HCT116 (cell line): ENCODE measurements at regions of chr2 and their contacts with region 1.

Region 1: DNA sequence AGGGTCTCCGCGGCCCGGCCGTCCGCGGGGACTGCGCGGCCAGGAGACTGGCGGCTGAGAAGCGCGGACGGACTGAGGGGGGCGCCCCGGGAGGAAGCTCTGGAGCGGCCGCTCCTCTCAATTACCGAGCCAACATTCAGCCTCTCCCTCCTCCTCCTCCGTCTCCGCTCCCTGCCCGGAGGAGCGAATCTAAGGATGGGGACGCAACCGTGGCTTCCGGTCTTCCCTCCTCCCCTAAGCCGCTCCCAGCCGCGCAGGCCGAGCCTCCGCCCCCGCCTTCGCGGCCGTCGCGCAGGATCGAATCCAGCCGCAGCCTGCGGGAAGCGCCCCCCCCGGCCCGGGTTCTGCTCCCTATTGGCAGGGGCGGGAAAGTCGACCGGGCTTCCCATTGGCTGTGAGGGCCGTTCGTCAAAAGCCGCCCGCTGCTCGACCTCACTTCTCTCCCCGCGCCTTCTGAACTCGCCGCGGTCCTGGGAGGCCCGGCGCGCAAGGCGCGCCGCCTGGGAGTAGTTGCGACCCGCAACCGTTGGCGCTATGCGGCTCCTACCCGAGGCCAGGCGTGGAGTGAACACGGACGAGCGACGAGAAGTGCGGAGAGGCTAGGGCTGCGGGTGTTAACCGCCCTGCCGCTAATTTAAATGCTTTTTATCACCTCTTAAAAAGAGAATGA is at the start of gene HNRNPLL:
- DNase-seq: peak; percentile 91
- ATAC-seq: peak; percentile 92
- H3K4me3 ChIP-seq: peak within 1 kb of the TSS; percentile 77 to 79
- H3K27ac ChIP-seq: peak within 1 kb of the TSS; percentile 95
- H3K4me1 ChIP-seq: peaks cover 23 to 28% of the 10 kb centered on the region in 2 experiments
- H3K27me3 ChIP-seq: no peaks in the 10 kb centered on the region
- CTCF ChIP-seq: no peak
- POLR2A ChIP-seq: peak; percentile 83
- RAD21 ChIP-seq: no peak
- total RNA-seq, gene HNRNPLL: 43.2 TPM

Region 2: GRCh38 chr2:38665854-38666555 is 63.1 kb after region 1 on chr2 and contains the start of gene GALM:
- CTCF ChIA-PET with region 1: interaction called, 4 read pairs
- POLR2A ChIA-PET with region 1: no interaction called
- RAD21 ChIA-PET with region 1: no interaction called
- intact Hi-C with region 1: loop called (anchors 1 kb)
- DNase-seq: peak; percentile 92
- ATAC-seq: peak; percentile 93
- H3K4me3 ChIP-seq: peak within 1 kb of the TSS; percentile 70 to 74
- H3K27ac ChIP-seq: peak within 1 kb of the TSS; percentile 55
- H3K4me1 ChIP-seq: peaks cover 8 to 23% of the 10 kb centered on the region in 2 experiments; a peak in 3 of 4 replicates
- H3K27me3 ChIP-seq: no peaks in the 10 kb centered on the region
- CTCF ChIP-seq: no peak
- POLR2A ChIP-seq: peak; percentile 62
- RAD21 ChIP-seq: 0 out of 2 replicates have a peak, but pooled peaks have one; percentile 6
- total RNA-seq, gene GALM: 10.2 TPM

Region 3: DNA sequence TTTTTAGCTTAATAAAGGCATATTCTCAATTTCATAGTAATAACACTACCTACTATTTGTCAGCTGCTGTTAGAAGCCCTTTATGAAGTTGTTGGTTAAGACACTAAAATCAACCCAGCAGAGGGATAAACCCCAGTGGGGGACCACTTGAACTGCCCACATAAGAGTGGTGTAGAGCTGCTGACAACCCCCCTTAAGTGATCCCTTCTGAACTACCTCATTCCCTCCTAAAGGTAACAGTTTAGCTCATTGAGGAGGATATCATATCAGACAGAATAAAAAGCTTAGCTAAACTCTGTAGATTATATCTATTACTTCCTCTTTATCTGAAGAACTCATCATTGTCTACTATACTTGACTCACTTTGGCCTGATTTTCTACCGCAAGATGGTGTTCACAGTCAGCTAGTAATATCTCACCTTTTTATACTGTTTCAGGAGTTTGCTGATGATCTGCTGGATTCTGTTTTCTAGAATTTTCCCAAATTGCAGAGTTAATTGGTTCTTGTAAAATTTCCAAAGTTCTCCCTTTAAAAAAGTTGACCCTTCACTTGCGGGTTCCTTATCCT is 79.2 kb after region 1 on chr2:
- CTCF ChIA-PET with region 1: no interaction called
- POLR2A ChIA-PET with region 1: no interaction called
- RAD21 ChIA-PET with region 1: no interaction called
- intact Hi-C with region 1: no loop called
- DNase-seq: no peak
- ATAC-seq: no peak
- H3K4me3 ChIP-seq: no peak overlapping the region
- H3K27ac ChIP-seq: no peak overlapping the region
- H3K4me1 ChIP-seq: no peaks in the 10 kb centered on the region
- H3K27me3 ChIP-seq: no peaks in the 10 kb centered on the region
- CTCF ChIP-seq: no peak
- POLR2A ChIP-seq: no peak
- RAD21 ChIP-seq: no peak

Region 4: DNA sequence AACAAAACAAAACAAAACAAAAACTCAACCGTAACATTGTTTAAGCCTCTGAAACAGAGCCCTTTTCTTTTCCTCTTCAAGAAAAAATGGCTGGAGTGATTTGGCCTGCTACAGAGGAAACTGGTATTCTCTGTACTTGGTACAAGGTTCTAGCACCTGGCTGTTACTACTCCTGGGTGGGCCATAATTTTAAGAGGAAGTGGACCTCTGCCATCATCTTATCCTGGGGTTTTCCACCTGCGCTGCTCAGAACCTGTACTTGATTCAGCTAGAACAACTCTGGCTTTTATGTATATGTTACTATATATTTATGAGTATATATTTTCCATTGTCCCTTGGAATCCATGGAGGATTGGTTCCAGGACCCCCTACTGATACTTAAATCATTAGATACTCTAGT is 125.8 kb after region 1 on chr2:
- CTCF ChIA-PET with region 1: interaction called, 3 read pairs
- POLR2A ChIA-PET with region 1: no interaction called
- RAD21 ChIA-PET with region 1: no interaction called
- intact Hi-C with region 1: loop called (anchors 5 kb)
- DNase-seq: no peak
- ATAC-seq: no peak
- H3K4me3 ChIP-seq: no peak overlapping the region
- H3K27ac ChIP-seq: no peak overlapping the region
- H3K4me1 ChIP-seq: 0 out of 4 replicates have a peak, but pooled peaks cover 0 to 2% of the 10 kb centered on the region in 2 experiments
- H3K27me3 ChIP-seq: no peaks in the 10 kb centered on the region
- CTCF ChIP-seq: no peak
- POLR2A ChIP-seq: no peak
- RAD21 ChIP-seq: no peak